Psoas muscle (tissue), 8 donors: ENCODE measurements at regions of chr1 and their contacts with region 1.

Region 1: GRCh38 chr1:24018611-24019580 is 38.8 kb upstream of the SRSF10 start:
- DNase-seq: peak; percentile 95 to 96
- ATAC-seq: peak; percentile 77 to 85 (median 80)
- H3K4me3 ChIP-seq: peak overlapping the region; percentile 7
- H3K27ac ChIP-seq: peak overlapping the region; percentile 92
- H3K4me1 ChIP-seq: peaks cover 61% of the 10 kb centered on the region
- H3K27me3 ChIP-seq: no peaks in the 10 kb centered on the region
- CTCF ChIP-seq: no peak

Region 2: DNA sequence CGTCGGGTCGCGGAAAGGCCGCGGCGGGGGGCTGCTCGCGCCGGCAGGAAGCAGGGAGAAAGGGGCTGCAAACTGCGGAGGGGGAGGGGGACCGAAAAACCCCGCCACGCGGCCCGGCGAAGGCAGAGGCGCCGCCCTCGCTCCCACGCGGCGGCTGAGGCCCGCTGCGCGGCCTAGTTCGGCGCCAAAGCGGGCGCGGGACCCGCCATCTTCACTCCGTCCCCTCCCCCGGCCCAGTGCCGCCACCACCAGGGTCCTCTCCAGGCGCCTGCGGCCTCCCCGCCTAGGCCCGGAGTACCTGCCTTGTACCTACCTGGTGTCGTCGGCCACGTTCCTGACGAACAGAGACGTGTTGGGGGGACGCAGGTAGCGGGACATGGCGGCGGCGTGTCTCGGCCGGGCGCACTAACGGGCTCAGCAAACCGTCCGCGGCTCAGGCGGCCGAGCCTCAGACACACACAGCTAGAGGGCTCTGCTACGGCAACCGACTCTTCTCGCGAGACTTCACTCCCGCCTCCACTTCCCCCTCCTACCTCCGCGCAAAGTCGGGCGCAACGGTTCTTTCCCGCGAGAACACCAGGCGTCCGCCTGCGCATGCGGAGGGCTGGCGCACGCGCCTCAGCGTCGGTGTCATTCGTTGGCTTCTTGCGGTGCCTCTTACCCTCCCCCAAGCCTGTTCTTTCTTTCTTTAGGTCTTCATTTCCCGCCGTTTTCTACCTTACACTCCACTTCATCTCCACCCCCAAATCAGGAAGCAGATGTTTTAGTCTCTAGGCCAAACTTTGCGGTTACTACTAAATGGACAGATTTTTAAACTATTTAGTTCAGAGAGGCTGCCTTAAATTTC is 38.8 kb before region 1 on chr1 and contains the start of gene SRSF10:
- intact Hi-C with region 1: loop called in 1 of 2 experiments (anchors 5 kb)
- DNase-seq: peak; percentile 97 to 99
- ATAC-seq: peak; percentile 98 to 99 (median 98)
- H3K4me3 ChIP-seq: peak within 1 kb of the TSS; percentile 88
- H3K27ac ChIP-seq: peak within 1 kb of the TSS; percentile 97
- H3K4me1 ChIP-seq: peaks cover 36% of the 10 kb centered on the region
- H3K27me3 ChIP-seq: no peaks in the 10 kb centered on the region
- CTCF ChIP-seq: peak; percentile 34
- total RNA-seq, gene SRSF10: 29.5 to 54.0 (median 46.7) TPM

Region 3: GRCh38 chr1:24065304-24066050 is 46.6 kb after region 1 on chr1:
- intact Hi-C with region 1: no loop called
- DNase-seq: no peak
- ATAC-seq: no peak
- H3K4me3 ChIP-seq: no peak overlapping the region
- H3K27ac ChIP-seq: no peak overlapping the region
- H3K4me1 ChIP-seq: no peaks in the 10 kb centered on the region
- H3K27me3 ChIP-seq: no peaks in the 10 kb centered on the region
- CTCF ChIP-seq: no peak